Calu3 (cell line): ENCODE measurements at regions of chr17 and their contacts with region 1.

Region 1: GRCh38 chr17:56172517-56172982 is 19.3 kb downstream of the ANKFN1 start:
- DNase-seq: no peak
- H3K4me3 Mint-ChIP-seq: no peak overlapping the region
- H3K27ac Mint-ChIP-seq: no peak overlapping the region
- H3K4me1 Mint-ChIP-seq: no peaks in the 10 kb centered on the region
- H3K27me3 Mint-ChIP-seq: no peaks in the 10 kb centered on the region
- CTCF ChIP-seq: no peak

Region 2: DNA sequence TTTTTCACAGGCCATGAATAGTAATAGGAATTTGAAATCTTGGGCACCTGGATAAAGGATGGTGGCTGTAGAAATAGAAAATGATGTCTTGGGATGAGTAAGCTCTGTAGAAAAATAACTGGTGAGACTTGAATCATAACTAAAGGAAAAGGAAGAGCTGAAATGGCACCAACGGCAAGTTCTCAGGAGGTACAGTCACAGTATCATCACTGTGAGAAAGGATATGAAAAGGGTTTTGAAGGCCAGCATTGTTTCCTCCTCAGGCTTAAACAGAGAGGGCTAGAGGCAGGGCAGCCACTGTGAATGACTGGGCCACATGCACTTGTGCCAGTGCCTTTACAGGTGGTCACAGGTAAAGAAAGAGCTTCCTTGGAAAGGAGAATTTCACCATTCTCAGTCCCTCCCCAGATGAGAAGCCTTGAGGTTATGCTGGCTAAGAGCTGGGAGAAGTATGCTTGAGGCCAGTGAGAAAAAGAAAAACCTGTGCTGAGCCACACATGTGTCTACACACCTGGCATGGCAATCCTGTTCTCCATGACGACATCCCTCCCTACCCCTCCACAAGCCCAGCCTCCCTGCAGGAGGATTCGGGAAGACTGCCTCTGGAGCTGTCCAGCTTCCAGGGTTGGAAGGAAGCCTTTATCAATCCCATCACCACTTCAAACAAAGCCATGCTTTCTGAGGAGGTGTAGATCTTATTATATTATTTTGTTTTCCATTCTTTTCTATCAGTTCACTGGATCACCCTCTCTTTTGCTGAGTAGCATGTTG is 23.1 kb before region 1 on chr17:
- CTCF ChIA-PET with region 1: no interaction called
- intact Hi-C with region 1: loop called (anchors 1 kb)
- DNase-seq: no peak
- H3K4me3 Mint-ChIP-seq: no peak overlapping the region
- H3K27ac Mint-ChIP-seq: no peak overlapping the region
- H3K4me1 Mint-ChIP-seq: no peaks in the 10 kb centered on the region
- H3K27me3 Mint-ChIP-seq: no peaks in the 10 kb centered on the region
- CTCF ChIP-seq: no peak